Mammary epithelial cell (primary cell): ENCODE measurements at regions of chr1 and their contacts with region 1.

Region 1: GRCh38 chr1:75991497-75992114 is 59.4 kb upstream of the ASB17 start:
- DNase-seq: peak; percentile 65
- H3K4me3 ChIP-seq: no peak overlapping the region
- H3K27ac ChIP-seq: no peak overlapping the region
- H3K4me1 ChIP-seq: no peaks in the 10 kb centered on the region
- H3K27me3 ChIP-seq: peaks cover 12% of the 10 kb centered on the region
- CTCF ChIP-seq: peak; percentile 82 to 89

Region 2: GRCh38 chr1:75908717-75909152 is 82.9 kb before region 1 on chr1:
- CTCF ChIA-PET with region 1: no interaction called
- dilution Hi-C with region 1: no loop called
- in situ Hi-C with region 1: no loop called
- intact Hi-C with region 1: loop called (anchors 2 kb)
- DNase-seq: peak; percentile 53
- H3K4me3 ChIP-seq: no peak overlapping the region
- H3K27ac ChIP-seq: no peak overlapping the region
- H3K4me1 ChIP-seq: no peaks in the 10 kb centered on the region
- H3K27me3 ChIP-seq: no peaks in the 10 kb centered on the region
- CTCF ChIP-seq: peak; percentile 49 to 74

Region 3: GRCh38 chr1:76090283-76091203 is 98.9 kb after region 1 on chr1:
- CTCF ChIA-PET with region 1: no interaction called
- dilution Hi-C with region 1: no loop called
- in situ Hi-C with region 1: no loop called
- intact Hi-C with region 1: loop called (anchors 10 kb)
- DNase-seq: no peak
- H3K4me3 ChIP-seq: no peak overlapping the region
- H3K27ac ChIP-seq: no peak overlapping the region
- H3K4me1 ChIP-seq: no peaks in the 10 kb centered on the region
- H3K27me3 ChIP-seq: no peaks in the 10 kb centered on the region
- CTCF ChIP-seq: no peak